Cardiac septum (tissue), 1 donor: ENCODE measurements at regions of chr6 and their contacts with region 1.

Region 1: DNA sequence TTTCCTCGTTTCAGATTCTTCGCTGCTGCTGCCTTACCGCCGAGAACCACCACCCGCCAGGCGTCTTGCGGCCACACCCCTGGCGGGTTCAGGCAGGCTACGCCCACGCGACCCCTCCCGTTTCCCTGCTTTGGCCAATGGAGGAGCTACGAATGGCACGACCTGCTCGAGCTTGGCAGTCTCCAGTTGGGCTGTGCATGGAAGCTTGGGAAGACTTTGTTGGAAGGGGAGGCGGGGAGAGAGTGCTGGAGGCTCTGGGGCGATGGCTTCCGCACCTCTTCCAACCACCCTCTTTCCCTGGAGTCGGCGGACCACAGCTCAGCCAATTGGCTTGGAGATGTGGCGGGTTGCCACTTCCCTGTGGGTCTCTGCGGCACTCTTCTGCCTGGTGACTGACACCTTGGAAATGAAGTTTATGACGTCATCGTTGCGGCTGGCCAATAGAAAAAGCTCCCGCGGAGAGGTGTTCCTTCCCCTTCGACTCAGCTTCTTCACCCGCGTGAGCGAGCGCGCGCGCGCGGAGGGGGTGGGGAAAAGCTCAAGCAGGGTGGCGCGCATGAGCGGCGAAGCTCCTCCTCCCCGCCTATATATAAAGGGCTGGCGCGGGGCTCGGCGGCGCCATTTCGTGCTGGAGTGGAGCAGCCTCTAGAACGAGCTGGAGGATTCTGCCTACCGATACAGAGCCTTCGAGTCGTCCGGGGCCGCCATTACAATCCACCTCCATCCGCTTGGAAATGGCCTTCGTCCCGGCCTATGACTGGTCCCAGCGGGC is 3.4 kb downstream of the BRD2 start:
- DNase-seq: peak; percentile 100

Region 2: GRCh38 chr6:32853541-32854375 is 118.0 kb before region 1 on chr6 and contains the starts of genes PSMB9 and TAP1:
- intact Hi-C with region 1: loop called (anchors 2 kb)
- DNase-seq: peak; percentile 99
- total RNA-seq, gene PSMB9: 14.2 TPM
- total RNA-seq, gene TAP1: 18.1 TPM

Region 3: GRCh38 chr6:32885698-32886286 is 86.0 kb before region 1 on chr6:
- intact Hi-C with region 1: loop called (anchors 5 kb)
- DNase-seq: no peak

Region 4: DNA sequence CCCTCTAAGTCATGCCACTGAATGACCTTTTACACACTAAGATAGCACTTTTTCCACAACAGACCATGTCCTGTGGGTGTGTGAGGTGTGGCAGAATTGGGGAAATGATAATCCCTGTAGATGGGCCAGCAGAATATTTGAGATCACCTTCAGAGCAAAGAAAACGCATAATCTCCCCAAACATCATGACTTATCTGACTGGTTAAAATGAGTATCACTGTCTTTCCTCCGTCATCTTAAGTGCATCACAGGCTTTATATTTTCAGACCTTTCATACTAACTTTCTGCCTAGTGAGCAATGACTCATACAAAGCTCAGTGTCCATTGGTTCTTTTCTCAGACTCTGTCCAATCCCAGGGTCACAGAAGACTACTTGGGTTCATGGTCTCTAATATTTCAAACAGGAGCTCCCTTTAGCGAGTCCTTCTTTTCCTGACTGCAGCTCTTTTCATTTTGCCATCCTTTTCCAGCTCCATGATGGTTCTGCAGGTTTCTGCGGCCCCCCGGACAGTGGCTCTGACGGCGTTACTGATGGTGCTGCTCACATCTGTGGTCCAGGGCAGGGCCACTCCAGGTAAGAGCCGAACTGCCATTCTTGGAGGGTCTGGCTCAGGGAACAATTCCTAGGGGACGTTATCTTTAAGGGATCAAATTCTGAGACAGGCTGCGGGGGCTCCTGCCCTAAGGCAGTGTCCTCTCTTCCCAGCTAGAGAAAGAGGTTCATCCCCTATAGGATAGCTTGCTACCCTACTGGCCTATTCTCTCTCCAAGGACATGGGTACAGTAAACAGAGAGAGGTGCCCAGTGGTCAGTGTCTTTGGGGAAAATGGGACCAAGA is 104.0 kb after region 1 on chr6 and contains the start of gene HLA-DPB1:
- intact Hi-C with region 1: no loop called
- DNase-seq: no peak
- total RNA-seq, gene HLA-DPB1: 32.8 TPM

Region 5: GRCh38 chr6:33200219-33201146 is 228.7 kb after region 1 on chr6 and contains the starts of genes RXRB and SLC39A7:
- intact Hi-C with region 1: loop called (anchors 2 kb)
- DNase-seq: peak; percentile 99
- total RNA-seq, gene RXRB: 33.5 TPM
- total RNA-seq, gene SLC39A7: 62.4 TPM